GM23248 (cell line): ENCODE measurements at regions of chr12 and their contacts with region 1.

Region 1: GRCh38 chr12:442235-442884 is 17.4 kb upstream of the B4GALNT3 start:
- DNase-seq: peak; percentile 62
- H3K4me3 ChIP-seq: no peak overlapping the region
- H3K27ac ChIP-seq: no peak overlapping the region
- H3K4me1 ChIP-seq: no peaks in the 10 kb centered on the region
- H3K27me3 ChIP-seq: no peaks in the 10 kb centered on the region

Region 2: GRCh38 chr12:356276-356988 is 85.9 kb before region 1 on chr12:
- in situ Hi-C with region 1: no loop called
- DNase-seq: peak; percentile 67
- H3K4me3 ChIP-seq: no peak overlapping the region
- H3K27ac ChIP-seq: peak overlapping the region; percentile 55
- H3K4me1 ChIP-seq: peaks cover 22% of the 10 kb centered on the region
- H3K27me3 ChIP-seq: no peaks in the 10 kb centered on the region

Region 3: DNA sequence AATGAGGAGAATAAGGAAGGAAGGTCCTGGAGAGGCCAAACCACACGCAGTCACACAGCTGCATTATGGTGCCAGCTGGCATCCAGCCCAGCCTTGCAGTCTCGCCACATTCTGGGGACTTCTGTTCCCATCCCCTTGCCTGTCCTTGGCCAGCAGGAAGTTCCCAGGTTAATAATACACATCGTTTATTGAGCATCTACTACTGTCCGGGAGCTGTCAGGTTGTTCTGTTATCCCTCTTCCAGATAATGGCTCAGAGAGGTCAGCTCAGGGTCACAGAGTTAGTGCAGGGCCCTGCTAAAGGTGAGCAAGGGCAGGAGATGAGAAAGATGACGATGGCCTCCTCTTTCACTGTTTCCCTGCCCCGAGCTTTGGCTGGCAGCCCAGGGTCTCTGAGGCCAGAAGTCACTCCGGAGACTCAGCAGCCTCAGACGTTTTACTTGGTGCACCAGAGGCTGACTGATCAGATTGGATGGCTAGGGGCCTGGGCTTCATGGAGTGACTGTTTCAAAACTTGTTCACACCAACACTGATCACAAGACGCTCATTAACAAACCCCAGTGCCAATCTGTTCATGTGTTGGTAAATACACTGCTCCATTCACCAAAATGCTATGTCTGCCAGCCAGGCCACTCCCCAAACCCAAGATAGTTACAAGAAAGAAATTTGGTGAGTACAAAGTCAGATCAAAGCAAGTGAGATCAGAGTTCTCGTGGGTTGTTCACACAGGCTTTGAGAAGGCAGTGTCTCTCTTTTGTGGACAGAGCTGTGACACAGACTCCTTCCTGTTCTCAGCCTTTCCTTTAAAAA is 96.6 kb after region 1 on chr12:
- in situ Hi-C with region 1: loop called (anchors 10 kb)
- DNase-seq: peak; percentile 73
- H3K4me3 ChIP-seq: no peak overlapping the region
- H3K27ac ChIP-seq: no peak overlapping the region
- H3K4me1 ChIP-seq: peaks cover 9% of the 10 kb centered on the region
- H3K27me3 ChIP-seq: no peaks in the 10 kb centered on the region

Region 4: DNA sequence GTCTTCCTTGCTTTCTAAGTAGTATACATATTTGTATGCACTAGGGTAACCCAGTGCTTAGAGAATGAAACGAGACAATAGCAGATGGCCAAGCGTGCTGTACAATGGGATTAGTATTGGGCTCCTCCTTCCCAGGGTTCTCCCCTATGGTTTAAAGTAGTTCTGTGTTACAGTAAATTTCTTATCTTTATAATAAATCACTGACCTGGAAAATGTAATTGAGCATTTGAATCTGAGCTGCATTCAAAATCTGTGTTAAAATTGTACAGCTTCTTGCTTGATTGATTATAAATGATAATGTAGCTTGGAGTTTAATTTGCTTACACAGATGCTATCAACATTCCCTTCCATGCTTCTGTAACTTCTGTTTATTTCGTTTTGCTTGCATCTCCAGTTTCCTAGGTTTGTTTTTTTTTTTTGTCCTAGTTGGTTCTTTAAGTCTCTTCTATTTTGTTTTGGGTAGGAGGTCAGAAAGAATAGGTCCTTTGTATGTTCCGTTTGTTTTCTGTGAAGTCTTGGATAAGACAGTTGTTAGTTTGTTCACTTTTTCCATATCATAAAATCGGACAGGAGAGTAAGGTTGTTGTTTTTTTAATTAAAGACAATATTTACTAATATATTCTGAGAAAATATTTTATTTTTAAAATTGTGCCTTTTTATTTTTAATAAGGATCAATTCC is 719.9 kb after region 1 on chr12:
- in situ Hi-C with region 1: no loop called
- DNase-seq: no peak
- H3K4me3 ChIP-seq: no peak overlapping the region
- H3K27ac ChIP-seq: no peak overlapping the region
- H3K4me1 ChIP-seq: no peaks in the 10 kb centered on the region
- H3K27me3 ChIP-seq: no peaks in the 10 kb centered on the region